Caco-2 (cell line): ENCODE measurements at regions of chr19 and their contacts with region 1.

Region 1: GRCh38 chr19:52897144-52897935 is at the start of gene ZNF320:
- DNase-seq: peak; percentile 96
- H3K4me3 ChIP-seq: peak within 1 kb of the TSS; percentile 73
- H3K4me3 Mint-ChIP-seq: peak within 1 kb of the TSS; percentile 87
- H3K27ac Mint-ChIP-seq: peak within 1 kb of the TSS; percentile 95
- H3K4me1 ChIP-seq: peaks cover 9% of the 10 kb centered on the region; the same call in 1 of the 2 replicates
- H3K4me1 Mint-ChIP-seq: peaks cover 5% of the 10 kb centered on the region
- H3K27me3 ChIP-seq: no peaks in the 10 kb centered on the region
- H3K27me3 Mint-ChIP-seq: no peaks in the 10 kb centered on the region
- CTCF ChIP-seq: no peak
- total RNA-seq, gene ZNF320: 14.7 and 15.5 TPM in 2 replicates

Region 2: GRCh38 chr19:52880895-52881389 is 16.4 kb before region 1 on chr19:
- CTCF ChIA-PET with region 1: no interaction called
- POLR2A ChIA-PET with region 1: no interaction called
- intact Hi-C with region 1: no loop called
- DNase-seq: no peak
- H3K4me3 ChIP-seq: no peak overlapping the region
- H3K4me3 Mint-ChIP-seq: no peak overlapping the region
- H3K27ac Mint-ChIP-seq: no peak overlapping the region
- H3K4me1 ChIP-seq: no peaks in the 10 kb centered on the region
- H3K4me1 Mint-ChIP-seq: no peaks in the 10 kb centered on the region
- H3K27me3 ChIP-seq: no peaks in the 10 kb centered on the region
- H3K27me3 Mint-ChIP-seq: no peaks in the 10 kb centered on the region
- CTCF ChIP-seq: no peak

Region 3: DNA sequence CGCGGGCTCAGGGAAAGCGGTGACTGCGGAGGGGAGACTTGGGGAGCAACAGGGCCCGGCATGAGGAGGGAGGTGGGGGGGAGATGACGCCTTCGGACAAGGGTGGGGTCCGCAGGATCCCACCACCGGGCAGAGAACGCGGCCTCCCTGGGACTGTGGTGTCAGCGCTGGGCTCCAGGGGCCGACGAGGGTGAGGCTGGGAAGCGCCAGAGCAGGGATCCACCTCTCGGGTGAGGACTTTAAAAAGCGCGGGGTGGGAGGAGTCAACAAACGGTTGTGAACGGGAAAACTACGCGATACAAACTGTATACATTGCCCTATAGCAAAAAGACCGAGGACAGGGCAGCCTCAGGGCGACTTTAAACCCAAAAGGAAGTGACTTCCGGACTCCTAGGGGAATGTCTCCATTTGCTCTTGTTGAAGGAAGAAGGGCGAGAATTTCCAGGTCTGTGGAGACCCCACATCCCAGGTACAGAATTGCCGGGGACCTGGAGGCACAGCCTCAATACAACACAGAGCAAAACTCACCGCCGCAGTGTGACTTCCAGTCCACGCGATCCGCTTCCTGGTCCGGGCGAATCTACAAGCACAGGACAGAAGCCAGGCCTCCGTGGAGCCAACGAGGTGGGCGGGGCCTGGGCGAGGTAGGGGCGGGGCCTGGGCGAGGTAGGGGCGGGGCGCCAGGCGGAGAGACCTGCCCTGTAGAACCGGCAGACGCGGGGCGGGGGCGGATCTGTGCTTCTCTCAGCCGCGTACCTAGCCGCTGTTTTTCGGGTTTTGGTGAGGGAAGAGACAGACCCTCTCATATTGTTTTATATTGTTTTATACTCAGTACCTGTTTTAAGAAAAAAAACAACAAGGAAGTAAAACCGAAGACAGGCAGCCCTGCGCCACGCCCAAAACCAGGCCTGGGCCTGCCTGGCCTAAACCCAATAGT is 25.8 kb after region 1 on chr19 and contains the start of gene ZNF888:
- CTCF ChIA-PET with region 1: no interaction called
- POLR2A ChIA-PET with region 1: no interaction called
- intact Hi-C with region 1: loop called (anchors 2 kb)
- DNase-seq: peak; percentile 89 to 91
- H3K4me3 ChIP-seq: peak within 1 kb of the TSS; percentile 59
- H3K4me3 Mint-ChIP-seq: peak within 1 kb of the TSS; percentile 74
- H3K27ac Mint-ChIP-seq: peak within 1 kb of the TSS; percentile 22
- H3K4me1 ChIP-seq: peaks cover 4% of the 10 kb centered on the region; the same call in 1 of the 2 replicates
- H3K4me1 Mint-ChIP-seq: peaks cover 14% of the 10 kb centered on the region
- H3K27me3 ChIP-seq: no peaks in the 10 kb centered on the region
- H3K27me3 Mint-ChIP-seq: no peaks in the 10 kb centered on the region
- CTCF ChIP-seq: no peak
- total RNA-seq, gene ZNF888: 7.3 and 9.0 TPM in 2 replicates